GM10248 (cell line): ENCODE measurements at regions of chr7 and their contacts with region 1.

Region 1: GRCh38 chr7:116224492-116225098 is 14.3 kb downstream of the TES start:
- DNase-seq: no peak
- CTCF ChIP-seq: no peak

Region 2: GRCh38 chr7:116030651-116031276 is 193.8 kb before region 1 on chr7 and contains the start of gene TFEC:
- CTCF ChIA-PET with region 1: no interaction called
- POLR2A ChIA-PET with region 1: no interaction called
- DNase-seq: no peak
- CTCF ChIP-seq: no peak

Region 3: GRCh38 chr7:116211006-116211912 is 13.3 kb before region 1 on chr7:
- CTCF ChIA-PET with region 1: interaction called, 64 read pairs
- POLR2A ChIA-PET with region 1: no interaction called
- DNase-seq: peak; percentile 59
- CTCF ChIP-seq: no peak

Region 4: GRCh38 chr7:116242178-116242577 is 17.6 kb after region 1 on chr7:
- CTCF ChIA-PET with region 1: interaction called, 41 read pairs
- POLR2A ChIA-PET with region 1: no interaction called
- DNase-seq: no peak
- CTCF ChIP-seq: no peak

Region 5: DNA sequence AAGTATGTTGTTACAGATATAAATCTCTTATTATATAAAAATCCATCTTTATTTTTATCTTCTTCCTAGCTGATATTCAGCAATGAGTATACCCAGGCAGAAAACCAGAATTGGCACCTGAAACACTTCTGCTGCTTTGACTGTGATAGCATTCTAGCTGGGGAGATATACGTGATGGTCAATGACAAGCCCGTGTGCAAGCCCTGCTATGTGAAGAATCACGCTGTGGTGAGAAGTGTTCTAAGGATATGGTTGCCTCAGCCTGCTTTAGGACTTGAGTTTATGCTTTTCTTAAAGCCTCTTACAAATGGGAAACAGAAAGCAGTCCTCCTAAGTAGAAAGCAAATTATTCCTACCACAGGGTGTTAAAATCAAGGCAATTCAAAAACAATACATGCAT is 27.7 kb after region 1 on chr7:
- CTCF ChIA-PET with region 1: no interaction called
- POLR2A ChIA-PET with region 1: no interaction called
- DNase-seq: no peak
- CTCF ChIP-seq: no peak